Panc1 (cell line): ENCODE measurements at regions of chr10 and their contacts with region 1.

Region 1: DNA sequence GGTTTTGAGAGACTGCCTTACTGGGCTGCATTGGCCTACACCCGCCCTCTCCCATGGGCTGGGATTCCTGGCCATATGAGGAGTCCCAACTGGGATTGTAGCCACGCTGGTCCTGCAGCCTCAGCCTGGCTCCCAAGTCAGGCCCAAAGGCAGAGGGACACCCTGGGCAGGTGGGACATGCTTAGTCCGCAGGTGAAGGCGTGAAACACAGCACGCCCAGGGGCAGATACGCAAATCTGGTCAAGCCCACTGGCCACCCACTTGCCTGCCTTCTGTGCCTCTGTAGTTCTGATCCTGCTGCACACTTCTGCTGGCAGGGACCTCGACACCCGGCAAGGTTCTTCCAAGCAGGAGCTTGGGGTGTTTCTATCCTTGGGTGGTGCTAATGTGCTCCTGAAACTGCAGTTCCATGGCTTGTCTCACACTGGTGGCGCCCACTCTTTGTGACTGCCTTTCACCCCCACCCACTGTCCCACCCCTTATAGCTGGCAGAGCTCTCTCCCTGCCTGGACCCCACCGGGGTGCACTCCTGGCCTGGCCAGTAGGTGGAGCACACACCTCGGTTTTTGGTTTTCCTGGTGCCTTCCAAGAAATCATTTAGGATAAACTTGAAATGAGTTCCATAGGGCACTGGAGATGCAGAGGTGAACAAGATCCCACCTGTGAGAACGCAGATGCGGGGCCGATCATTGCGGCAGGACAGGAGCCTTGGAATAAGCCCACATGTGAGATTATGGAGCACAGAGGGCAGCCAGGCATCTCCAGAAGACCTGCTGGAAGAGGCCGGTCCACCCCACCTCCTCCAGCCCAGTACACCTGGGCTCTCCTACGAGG is 47.9 kb downstream of the MKI67 start:
- DNase-seq: peak; percentile 32
- ATAC-seq: peak; percentile 94
- H3K4me3 ChIP-seq: no peak overlapping the region
- H3K27ac ChIP-seq: no peak overlapping the region
- H3K4me1 ChIP-seq: no peaks in the 10 kb centered on the region
- H3K27me3 ChIP-seq: peaks cover 21% of the 10 kb centered on the region
- CTCF ChIP-seq: peak; percentile 94

Region 2: GRCh38 chr10:128150045-128150493 is 71.7 kb after region 1 on chr10:
- CTCF ChIA-PET with region 1: no interaction called
- POLR2A ChIA-PET with region 1: no interaction called
- in situ Hi-C with region 1: no loop called
- intact Hi-C with region 1: loop called (anchors 2 kb)
- DNase-seq: no peak
- ATAC-seq: peak; percentile 99
- H3K4me3 ChIP-seq: peak overlapping the region; percentile 50 to 76
- H3K27ac ChIP-seq: peak overlapping the region; percentile 26; the same call in 1 of the 2 replicates
- H3K4me1 ChIP-seq: no peaks in the 10 kb centered on the region
- H3K27me3 ChIP-seq: peaks cover 4% of the 10 kb centered on the region; the same call in 1 of the 2 replicates
- CTCF ChIP-seq: peak; percentile 100